Endothelial cell of umbilical vein (primary cell): ENCODE measurements at regions of chr16 and their contacts with region 1.

Region 1: DNA sequence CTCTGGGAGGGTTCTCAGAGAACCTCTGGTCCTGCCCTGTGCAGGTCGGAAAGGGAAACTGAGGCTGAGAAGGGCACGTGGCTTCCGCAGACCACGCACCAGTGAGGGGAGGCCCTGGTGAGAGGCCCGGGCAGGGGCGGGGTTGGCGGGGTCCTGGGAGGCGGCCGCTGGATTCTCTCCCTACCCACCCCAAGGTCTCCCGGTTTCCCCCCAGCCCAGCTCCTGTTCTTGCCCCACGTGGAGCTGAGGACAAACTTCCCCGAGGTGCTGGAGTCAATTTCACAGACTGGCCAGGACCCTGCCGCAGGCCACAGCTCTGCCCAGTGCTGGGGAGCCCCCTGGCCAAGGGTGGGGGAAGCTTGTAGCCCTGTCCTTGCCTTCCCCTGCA is 11.5 kb downstream of the CCL17 start:
- DNase-seq: no peak
- H3K4me3 ChIP-seq: no peak overlapping the region
- H3K27ac ChIP-seq: no peak overlapping the region
- H3K4me1 ChIP-seq: peaks cover 7% of the 10 kb centered on the region
- H3K27me3 ChIP-seq: no peaks in the 10 kb centered on the region
- CTCF ChIP-seq: no peak
- POLR2A ChIP-seq: no peak

Region 2: GRCh38 chr16:57084257-57084770 is 331.8 kb before region 1 on chr16:
- CTCF ChIA-PET with region 1: interaction called, 3 read pairs
- POLR2A ChIA-PET with region 1: no interaction called
- dilution Hi-C with region 1: no loop called
- intact Hi-C with region 1: loop called (anchors 5 kb)
- DNase-seq: peak; percentile 79
- H3K4me3 ChIP-seq: no peak overlapping the region
- H3K27ac ChIP-seq: no peak overlapping the region
- H3K4me1 ChIP-seq: no peaks in the 10 kb centered on the region
- H3K27me3 ChIP-seq: no peaks in the 10 kb centered on the region
- CTCF ChIP-seq: peak; percentile 95 to 98
- POLR2A ChIP-seq: no peak

Region 3: DNA sequence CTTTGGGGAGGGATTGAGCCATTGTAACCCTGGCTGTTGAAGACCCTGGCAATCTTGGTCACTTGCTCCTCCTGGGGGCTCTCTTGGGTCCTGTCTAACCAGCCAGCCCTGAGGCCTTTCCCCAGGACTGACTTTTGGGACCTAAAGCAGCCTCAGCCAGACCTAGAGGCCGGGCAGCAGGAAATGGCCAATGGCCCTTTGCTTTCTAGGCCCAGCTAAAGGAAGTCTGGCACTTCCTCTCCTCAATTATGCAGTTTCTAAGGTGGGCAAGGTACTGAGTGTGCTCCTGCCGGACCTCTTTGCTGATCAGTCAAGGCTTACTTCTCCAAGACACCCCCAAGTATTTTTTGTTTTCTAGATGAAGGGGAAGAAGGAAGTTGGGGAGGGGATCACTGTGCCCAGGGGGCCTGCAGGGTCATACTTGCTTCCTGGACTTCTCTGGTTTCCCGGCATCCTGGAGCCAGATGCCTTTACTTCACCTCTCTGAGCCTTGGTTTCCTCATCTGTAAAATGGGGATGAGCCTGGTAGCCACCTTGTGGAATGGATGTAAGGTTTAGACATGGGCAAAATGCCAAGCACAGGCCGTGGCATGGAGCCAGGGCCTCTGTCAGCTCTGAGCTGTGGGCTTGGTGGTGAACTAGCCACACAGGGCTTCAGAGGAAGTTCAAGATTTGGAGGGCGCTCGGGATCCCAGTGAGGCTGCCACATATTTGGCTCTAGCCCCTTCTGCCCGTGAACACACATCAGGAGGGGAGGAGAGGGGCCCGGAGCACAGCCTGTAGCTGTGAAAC is 35.2 kb before region 1 on chr16:
- CTCF ChIA-PET with region 1: interaction called, 11 read pairs
- POLR2A ChIA-PET with region 1: interaction called, 4 read pairs
- dilution Hi-C with region 1: no loop called
- intact Hi-C with region 1: loop called (anchors 1 kb)
- DNase-seq: peak; percentile 68
- H3K4me3 ChIP-seq: no peak overlapping the region
- H3K27ac ChIP-seq: no peak overlapping the region
- H3K4me1 ChIP-seq: peaks cover 12% of the 10 kb centered on the region
- H3K27me3 ChIP-seq: no peaks in the 10 kb centered on the region
- CTCF ChIP-seq: no peak
- POLR2A ChIP-seq: no peak

Region 4: GRCh38 chr16:57403965-57404817 is 11.9 kb before region 1 on chr16 and contains the start of gene CCL17:
- CTCF ChIA-PET with region 1: interaction called, 17 read pairs
- POLR2A ChIA-PET with region 1: no interaction called
- dilution Hi-C with region 1: no loop called
- intact Hi-C with region 1: no loop called
- DNase-seq: no peak
- H3K4me3 ChIP-seq: no peak within 1 kb of the TSS
- H3K27ac ChIP-seq: no peak within 1 kb of the TSS
- H3K4me1 ChIP-seq: peaks cover 5% of the 10 kb centered on the region
- H3K27me3 ChIP-seq: peaks cover 0 to 3% of the 10 kb centered on the region in 2 experiments
- CTCF ChIP-seq: no peak
- POLR2A ChIP-seq: no peak
- total RNA-seq, gene CCL17: not detected in 2 replicates